ENCODE measurements at regions of chr7 and their contacts with region 1.

Region 1: GRCh38 chr7:148939128-148939755 is 55.2 kb upstream of the EZH2 start:
- DNase-seq: no peak
- ATAC-seq: no peak
- H3K4me3 ChIP-seq: no peak overlapping the region
- H3K27ac ChIP-seq: no peak overlapping the region
- H3K4me1 ChIP-seq: no peaks in the 10 kb centered on the region
- H3K27me3 ChIP-seq: no peaks in the 10 kb centered on the region

Region 2: DNA sequence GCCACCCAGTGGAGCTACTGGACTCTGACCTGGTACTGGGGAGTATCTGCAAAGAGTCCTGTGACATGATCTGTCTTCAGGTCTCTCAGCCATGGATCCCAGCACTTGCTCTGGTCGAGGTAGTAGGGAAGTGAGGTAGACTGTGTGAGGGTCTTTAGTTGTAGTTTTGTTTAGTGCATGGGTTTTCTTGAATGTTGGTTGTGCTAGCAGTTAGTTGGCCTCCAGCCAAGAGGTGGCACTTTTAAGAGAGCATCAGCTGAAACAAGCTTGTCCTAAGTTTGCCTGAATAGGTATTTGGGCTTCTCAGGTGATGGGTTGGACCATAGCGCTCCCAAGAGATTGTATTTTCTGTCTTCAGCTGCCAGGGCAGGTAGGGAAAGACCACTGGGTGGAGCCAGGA is 871.9 kb before region 1 on chr7:
- intact Hi-C with region 1: no loop called
- DNase-seq: no peak
- ATAC-seq: no peak
- H3K4me3 ChIP-seq: no peak overlapping the region
- H3K27ac ChIP-seq: no peak overlapping the region
- H3K4me1 ChIP-seq: no peaks in the 10 kb centered on the region
- H3K27me3 ChIP-seq: no peaks in the 10 kb centered on the region

Region 3: GRCh38 chr7:148884299-148885022 is 54.8 kb before region 1 on chr7:
- intact Hi-C with region 1: loop called in 1 of 4 experiments (anchors 5 kb)
- DNase-seq: peak; percentile 93 to 98 (median 97)
- ATAC-seq: peak; percentile 99 to 100
- H3K4me3 ChIP-seq: peak overlapping the region; percentile 97
- H3K27ac ChIP-seq: peak overlapping the region; percentile 98
- H3K4me1 ChIP-seq: no peaks in the 10 kb centered on the region
- H3K27me3 ChIP-seq: no peaks in the 10 kb centered on the region

Measured in right cardiac atrium (tissue), 5 donors.